ENCODE measurements at regions of chr6 and their contacts with region 1.

Region 1: DNA sequence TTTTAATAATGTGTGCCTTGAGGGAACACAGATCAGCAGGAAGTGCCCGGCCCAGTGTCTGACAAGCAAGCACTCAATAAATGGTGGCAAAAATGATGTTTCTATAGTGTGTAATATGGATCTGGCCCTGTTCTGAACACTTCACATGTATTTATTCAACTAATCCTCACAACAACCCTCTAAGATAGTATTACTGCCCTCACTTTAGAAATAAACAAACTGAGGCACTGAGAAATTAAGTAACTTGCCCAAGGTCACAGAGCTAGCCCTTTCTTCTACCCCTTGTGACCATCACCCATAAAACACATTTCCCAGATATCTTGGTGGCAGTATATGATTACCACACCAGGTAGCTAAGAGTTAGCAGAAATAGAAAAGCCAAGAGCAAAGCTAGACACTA is 12.8 kb upstream of the MTFR2 start:
- DNase-seq: no peak
- H3K4me3 ChIP-seq: no peak overlapping the region
- H3K27ac ChIP-seq: no peak overlapping the region
- H3K4me1 ChIP-seq: no peaks in the 10 kb centered on the region
- H3K27me3 ChIP-seq: no peaks in the 10 kb centered on the region
- CTCF ChIP-seq: no peak

Region 2: GRCh38 chr6:135759831-135760230 is 503.1 kb before region 1 on chr6:
- CTCF ChIA-PET with region 1: no interaction called
- POLR2A ChIA-PET with region 1: no interaction called
- intact Hi-C with region 1: no loop called
- DNase-seq: no peak
- H3K4me3 ChIP-seq: no peak overlapping the region
- H3K27ac ChIP-seq: no peak overlapping the region
- H3K4me1 ChIP-seq: no peaks in the 10 kb centered on the region
- H3K27me3 ChIP-seq: no peaks in the 10 kb centered on the region
- CTCF ChIP-seq: no peak

Region 3: GRCh38 chr6:136280032-136280609 is 17.2 kb after region 1 on chr6:
- CTCF ChIA-PET with region 1: no interaction called
- POLR2A ChIA-PET with region 1: interaction called, 11 read pairs
- intact Hi-C with region 1: no loop called
- DNase-seq: no peak
- H3K4me3 ChIP-seq: no peak overlapping the region
- H3K27ac ChIP-seq: no peak overlapping the region
- H3K4me1 ChIP-seq: peaks cover 27% of the 10 kb centered on the region
- H3K27me3 ChIP-seq: no peaks in the 10 kb centered on the region
- CTCF ChIP-seq: no peak